ENCODE measurements at regions of chr1 and their contacts with region 1.

Region 1: GRCh38 chr1:177945943-177946650 is 23.8 kb downstream of the SEC16B start:
- DNase-seq: peak; percentile 43 to 63 (median 62)
- H3K4me3 ChIP-seq: no peak overlapping the region
- H3K27ac ChIP-seq: no peak overlapping the region
- H3K4me1 ChIP-seq: no peaks in the 10 kb centered on the region
- H3K27me3 ChIP-seq: no peaks in the 10 kb centered on the region

Region 2: DNA sequence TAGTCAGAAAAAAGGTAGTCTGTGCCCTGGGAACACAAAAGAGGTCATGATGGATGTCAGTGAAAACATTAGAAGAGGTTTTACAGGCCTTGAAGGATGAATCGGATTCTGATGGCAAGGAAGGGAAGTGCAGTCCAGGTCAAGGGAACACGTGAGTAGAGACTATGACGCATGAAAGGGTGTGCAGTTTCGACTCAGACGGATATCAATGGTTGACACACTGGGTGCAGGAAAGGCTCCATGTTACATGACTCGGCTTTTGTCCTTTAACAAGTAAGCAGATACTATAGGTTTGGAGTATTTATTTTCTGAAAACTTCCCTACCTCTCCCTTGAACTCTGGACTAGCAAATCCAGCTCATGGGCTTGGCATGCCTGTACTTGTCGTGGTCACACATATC is 31.5 kb before region 1 on chr1:
- CTCF ChIA-PET with region 1: no interaction called
- POLR2A ChIA-PET with region 1: no interaction called
- DNase-seq: no peak
- H3K4me3 ChIP-seq: no peak overlapping the region
- H3K27ac ChIP-seq: no peak overlapping the region
- H3K4me1 ChIP-seq: no peaks in the 10 kb centered on the region
- H3K27me3 ChIP-seq: peaks cover 0 to 4% (median 0%) of the 10 kb centered on the region in 5 experiments

Region 3: DNA sequence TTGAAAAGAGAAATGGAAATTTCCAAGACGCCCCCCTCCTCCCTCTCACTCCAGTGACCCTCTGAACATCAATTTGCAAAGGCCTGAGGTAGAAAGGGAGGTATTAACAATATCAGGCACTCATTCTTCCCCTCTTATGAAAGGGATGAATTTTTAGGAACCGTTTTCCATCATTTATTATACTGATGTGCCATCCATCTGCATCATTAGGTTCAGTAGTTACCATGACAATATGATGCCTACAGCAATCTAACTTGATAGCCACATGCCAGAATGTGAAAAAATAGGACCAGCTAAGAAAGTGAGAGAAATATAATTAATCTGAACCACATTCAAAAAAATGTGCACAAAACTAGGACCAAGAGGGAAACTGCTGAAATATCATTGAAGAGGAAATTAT is 17.1 kb before region 1 on chr1:
- CTCF ChIA-PET with region 1: interaction called, 11 read pairs
- POLR2A ChIA-PET with region 1: no interaction called
- DNase-seq: no peak
- H3K4me3 ChIP-seq: no peak overlapping the region
- H3K27ac ChIP-seq: no peak overlapping the region
- H3K4me1 ChIP-seq: peaks cover 0 to 3% (median 0%) of the 10 kb centered on the region in 4 experiments
- H3K27me3 ChIP-seq: no peaks in the 10 kb centered on the region

Measured in common myeloid progenitor, CD34-positive (primary cell).